ENCODE measurements at regions of chr6 and their contacts with region 1.

Region 1: GRCh38 chr6:110981202-110981600 is 637 bp upstream of the RPF2 start:
- DNase-seq: no peak
- H3K4me3 Mint-ChIP-seq: peak overlapping the region; percentile 99
- H3K27ac Mint-ChIP-seq: peak overlapping the region; percentile 98
- H3K4me1 Mint-ChIP-seq: peaks cover 14% of the 10 kb centered on the region
- H3K27me3 Mint-ChIP-seq: no peaks in the 10 kb centered on the region

Region 2: GRCh38 chr6:110528101-110528929 is 452.9 kb before region 1 on chr6:
- intact Hi-C with region 1: loop called (anchors 1 kb)
- DNase-seq: peak; percentile 24
- H3K4me3 Mint-ChIP-seq: no peak overlapping the region
- H3K27ac Mint-ChIP-seq: no peak overlapping the region
- H3K4me1 Mint-ChIP-seq: peaks cover 9% of the 10 kb centered on the region
- H3K27me3 Mint-ChIP-seq: peaks cover 8% of the 10 kb centered on the region

Region 3: DNA sequence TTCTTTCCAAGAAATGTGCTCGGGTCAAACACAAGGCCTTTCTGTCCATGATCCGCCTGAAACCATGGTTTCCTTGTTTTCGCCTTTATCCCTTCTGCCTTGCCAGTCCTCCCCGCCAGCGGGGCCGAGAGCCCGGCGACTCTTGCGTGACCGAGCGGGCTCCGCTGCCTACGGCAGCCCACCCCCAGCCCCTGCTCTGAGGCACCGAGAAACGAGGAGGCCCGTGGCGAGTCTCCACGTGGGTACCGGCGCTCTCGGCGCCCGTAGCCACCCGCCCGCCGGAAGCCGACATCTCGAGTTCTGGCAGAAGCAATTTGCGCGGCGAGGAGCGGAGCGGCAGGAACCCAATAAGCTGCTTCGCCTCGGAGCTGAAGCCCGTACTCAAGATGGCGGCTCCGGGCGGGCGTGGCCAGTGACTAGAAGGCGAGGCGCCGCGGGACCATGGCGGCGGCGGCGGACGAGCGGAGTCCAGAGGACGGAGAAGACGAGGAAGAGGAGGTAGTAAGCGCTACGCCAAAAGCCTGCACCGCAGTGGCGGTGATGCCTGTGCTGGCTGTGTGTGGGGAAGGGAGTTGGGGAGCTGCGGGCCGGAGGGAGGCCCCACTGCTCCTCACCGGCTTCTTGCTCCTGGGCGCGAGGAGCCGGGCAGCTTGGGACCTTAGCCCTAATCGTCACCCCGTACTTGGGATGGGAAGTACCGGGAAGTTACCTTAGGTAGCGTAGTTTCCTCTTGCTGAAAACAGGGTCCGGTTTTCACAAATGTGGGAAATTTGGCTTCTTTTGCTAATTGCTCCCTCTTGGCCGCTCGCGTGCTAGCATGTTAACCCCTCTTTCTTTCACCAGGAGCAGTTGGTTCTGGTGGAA is 22.6 kb before region 1 on chr6 and contains the start of gene GTF3C6:
- intact Hi-C with region 1: loop called (anchors 1 kb)
- DNase-seq: peak; percentile 93
- H3K4me3 Mint-ChIP-seq: peak within 1 kb of the TSS; percentile 100
- H3K27ac Mint-ChIP-seq: peak within 1 kb of the TSS; percentile 99
- H3K4me1 Mint-ChIP-seq: peaks cover 16% of the 10 kb centered on the region
- H3K27me3 Mint-ChIP-seq: peaks cover 2% of the 10 kb centered on the region
- total RNA-seq, gene GTF3C6: 137 TPM in 2 replicates

Region 4: DNA sequence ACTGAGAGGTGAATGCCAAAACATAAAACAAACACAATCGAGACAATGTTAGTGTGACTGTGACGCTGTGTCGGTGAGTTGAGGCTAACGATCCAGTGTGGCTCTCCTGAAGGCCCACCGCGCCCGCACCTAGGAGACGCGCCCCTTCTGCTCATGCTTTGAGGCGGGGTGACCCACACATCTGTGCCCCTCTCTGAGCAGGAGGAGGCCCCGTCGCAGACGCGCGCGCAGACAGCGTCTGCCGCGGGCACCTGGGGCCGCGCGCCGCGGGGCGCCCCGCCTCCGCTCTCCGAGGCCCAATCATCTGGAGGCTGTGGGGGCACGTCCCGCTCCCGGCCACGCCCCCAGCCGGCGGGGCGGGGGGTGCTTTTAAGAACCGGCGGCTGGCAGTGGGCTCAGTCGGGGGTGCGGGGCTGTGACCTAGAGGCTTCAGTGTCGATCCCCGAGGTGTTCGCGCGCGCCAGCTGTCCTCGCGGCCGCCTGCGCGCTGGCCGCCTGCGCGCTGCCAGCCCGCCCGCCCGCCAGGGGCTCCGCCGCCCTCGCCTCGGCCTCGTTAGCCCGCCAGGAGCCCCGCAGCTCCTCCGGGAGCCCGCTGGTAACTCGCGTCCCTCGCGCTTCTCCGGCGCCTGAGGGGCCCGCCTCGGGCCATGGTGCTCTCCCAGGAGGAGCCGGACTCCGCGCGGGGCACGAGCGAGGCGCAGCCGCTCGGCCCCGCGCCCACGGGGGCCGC is 106.1 kb after region 1 on chr6 and contains the start of gene SLC16A10:
- intact Hi-C with region 1: loop called (anchors 2 kb)
- DNase-seq: peak; percentile 66
- H3K4me3 Mint-ChIP-seq: peak within 1 kb of the TSS; percentile 88
- H3K27ac Mint-ChIP-seq: peak within 1 kb of the TSS; percentile 18
- H3K4me1 Mint-ChIP-seq: peaks cover 25% of the 10 kb centered on the region
- H3K27me3 Mint-ChIP-seq: peaks cover 14% of the 10 kb centered on the region
- total RNA-seq, gene SLC16A10: 2.8 and 3.2 TPM in 2 replicates